ENCODE measurements at regions of chr3 and their contacts with region 1.

Region 1: DNA sequence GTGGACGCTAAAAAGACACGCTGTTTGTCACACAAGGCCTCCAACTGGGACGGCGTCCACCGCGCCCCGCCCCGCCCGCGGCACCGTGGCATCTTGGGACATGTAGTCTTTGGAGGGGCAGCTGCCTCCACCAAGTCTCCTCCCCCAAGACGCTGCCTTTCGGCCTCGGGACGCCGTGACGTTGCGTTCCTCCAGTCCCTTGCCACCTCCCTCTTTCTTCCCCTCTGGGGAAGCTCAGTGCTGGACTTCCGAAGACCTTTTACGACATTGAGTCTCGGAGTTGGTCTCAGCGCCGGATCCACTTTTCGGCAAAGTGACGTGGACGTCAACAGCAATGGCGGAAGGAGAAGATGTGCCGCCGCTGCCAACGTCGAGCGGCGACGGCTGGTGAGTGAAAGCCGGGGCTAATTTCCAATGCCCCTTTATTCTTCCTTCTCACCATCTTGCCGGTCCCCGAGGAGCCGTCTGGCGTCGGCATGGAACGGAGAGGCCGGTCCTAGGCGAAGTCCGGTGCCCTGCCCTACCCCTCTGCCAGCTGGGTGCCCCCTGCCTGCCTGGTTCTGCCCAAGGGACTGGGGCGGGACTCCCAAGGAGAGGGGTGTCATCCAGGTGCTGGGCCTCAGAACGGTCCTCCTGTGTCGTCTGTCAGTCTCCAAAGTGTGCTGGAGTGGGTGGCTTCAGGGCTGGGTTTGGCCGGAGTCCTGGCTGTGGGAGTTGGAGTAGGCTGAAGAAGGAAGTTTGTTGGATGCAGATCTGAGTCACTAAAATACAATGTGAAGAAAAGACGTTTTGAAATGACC is at the start of gene TBC1D23:
- DNase-seq: peak; percentile 99
- H3K4me3 ChIP-seq: peak within 1 kb of the TSS; percentile 91
- H3K27ac ChIP-seq: peak within 1 kb of the TSS; percentile 18
- H3K4me1 ChIP-seq: peaks cover 14% of the 10 kb centered on the region
- CTCF ChIP-seq: no peak; the same call in 1 of the 2 replicates
- total RNA-seq, gene TBC1D23: 12.0 and 12.7 TPM in 2 replicates

Region 2: DNA sequence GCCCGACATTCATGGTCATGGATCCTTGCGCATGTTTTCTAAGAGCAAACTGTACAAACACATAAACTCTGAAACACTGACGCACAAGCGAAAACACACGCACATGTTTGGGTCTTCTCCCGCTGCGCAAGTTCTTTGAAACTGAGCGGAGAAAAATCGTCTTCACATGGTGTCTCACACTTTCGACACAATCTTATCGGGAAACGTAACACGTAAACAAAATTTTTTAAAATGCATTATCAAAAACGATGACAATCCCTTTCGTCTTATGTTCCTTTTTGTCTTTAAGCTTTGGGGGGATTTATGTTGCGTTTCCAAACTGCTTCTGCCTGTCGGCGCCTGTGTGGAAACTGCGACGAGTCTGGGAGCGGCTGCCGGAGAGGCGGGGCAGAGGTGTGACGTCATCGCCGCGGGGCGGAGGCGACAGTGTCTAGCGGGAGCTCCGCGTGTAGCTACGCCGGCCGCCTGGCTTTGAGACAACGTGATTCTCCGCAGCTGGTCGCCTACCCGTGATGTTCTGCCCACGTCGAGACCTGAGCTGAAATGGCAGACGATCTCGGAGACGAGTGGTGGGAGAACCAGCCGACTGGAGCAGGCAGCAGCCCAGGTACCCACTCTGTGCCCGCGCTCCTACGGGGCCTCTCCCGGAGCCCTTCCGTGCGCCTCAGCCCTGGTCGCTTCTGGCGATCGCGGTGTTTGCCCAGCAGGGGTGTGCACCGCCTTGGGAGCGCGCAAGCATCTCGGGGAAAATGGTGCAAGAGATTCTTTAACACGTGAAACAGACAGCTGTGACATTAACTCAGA is 443.2 kb before region 1 on chr3 and contains the start of gene CMSS1:
- CTCF ChIA-PET with region 1: no interaction called
- POLR2A ChIA-PET with region 1: interaction called, 3 read pairs
- intact Hi-C with region 1: loop called (anchors 5 kb)
- DNase-seq: peak; percentile 90
- H3K4me3 ChIP-seq: peak within 1 kb of the TSS; percentile 79
- H3K27ac ChIP-seq: peak within 1 kb of the TSS; percentile 36
- H3K4me1 ChIP-seq: peaks cover 18% of the 10 kb centered on the region
- CTCF ChIP-seq: peak; percentile 33; the same call in 1 of the 2 replicates
- total RNA-seq, gene CMSS1: 25.7 and 34.2 TPM in 2 replicates

Region 3: GRCh38 chr3:100112745-100113144 is 148.1 kb before region 1 on chr3:
- CTCF ChIA-PET with region 1: no interaction called
- POLR2A ChIA-PET with region 1: no interaction called
- intact Hi-C with region 1: no loop called
- DNase-seq: no peak
- H3K4me3 ChIP-seq: no peak overlapping the region
- H3K27ac ChIP-seq: no peak overlapping the region
- H3K4me1 ChIP-seq: no peaks in the 10 kb centered on the region
- CTCF ChIP-seq: no peak